Dorsolateral prefrontal cortex (tissue), 120 donors: ENCODE measurements at regions of chr3 and their contacts with region 1.

Region 1: DNA sequence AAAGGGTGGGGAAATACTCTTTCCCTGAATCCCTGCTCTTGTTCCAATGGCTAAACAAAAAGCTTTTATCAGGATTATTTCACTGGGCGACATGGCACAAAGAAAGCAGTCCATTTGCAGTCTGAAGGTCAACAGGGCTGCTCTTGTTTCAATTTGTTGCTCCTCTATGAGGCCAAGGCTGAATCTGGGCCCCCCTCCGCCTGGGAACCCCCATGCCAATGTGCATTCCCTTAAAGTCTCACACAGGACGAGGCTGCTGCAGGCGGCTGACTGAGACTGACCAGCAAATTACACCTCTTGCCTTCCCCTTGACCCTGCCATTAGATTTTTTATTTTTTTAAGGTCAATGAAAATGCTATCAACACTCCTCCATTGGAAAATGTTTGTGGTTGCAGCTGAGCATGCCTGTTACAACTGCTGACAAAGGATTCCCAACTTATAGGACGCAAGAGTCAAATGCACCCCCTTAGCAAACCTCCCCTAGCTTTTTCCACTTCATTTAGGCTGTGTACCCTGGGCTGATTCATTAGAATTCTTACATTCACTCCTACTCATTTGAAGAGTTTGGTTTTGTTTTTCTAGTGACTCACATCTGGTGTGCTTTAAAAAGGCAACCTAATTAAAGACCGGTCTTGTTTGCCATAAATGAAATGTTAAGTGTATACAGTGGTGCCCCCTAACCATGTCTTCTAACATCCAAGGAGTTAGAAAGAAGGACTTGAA is 60.8 kb upstream of the ARHGEF3 start:
- DNase-seq: peak in 9 of 10 donors; percentile 30 to 72 (median 64)
- H3K4me3 ChIP-seq: peak overlapping the region in 4 of 59 donors; percentile 19 to 28 (median 24)
- H3K27ac ChIP-seq: peak overlapping the region in 48 of 59 donors; percentile 1 to 82 (median 65)
- H3K27me3 ChIP-seq: no peaks in the 10 kb centered on the region
- CTCF ChIP-seq: peak in 3 of 56 donors; percentile 10 to 25 (median 15)

Region 2: GRCh38 chr3:56477646-56478045 is 384.9 kb before region 1 on chr3:
- intact Hi-C with region 1: no loop called
- DNase-seq: no peak
- H3K4me3 ChIP-seq: no peak overlapping the region
- H3K27ac ChIP-seq: no peak overlapping the region
- H3K27me3 ChIP-seq: no peaks in the 10 kb centered on the region
- CTCF ChIP-seq: no peak

Region 3: DNA sequence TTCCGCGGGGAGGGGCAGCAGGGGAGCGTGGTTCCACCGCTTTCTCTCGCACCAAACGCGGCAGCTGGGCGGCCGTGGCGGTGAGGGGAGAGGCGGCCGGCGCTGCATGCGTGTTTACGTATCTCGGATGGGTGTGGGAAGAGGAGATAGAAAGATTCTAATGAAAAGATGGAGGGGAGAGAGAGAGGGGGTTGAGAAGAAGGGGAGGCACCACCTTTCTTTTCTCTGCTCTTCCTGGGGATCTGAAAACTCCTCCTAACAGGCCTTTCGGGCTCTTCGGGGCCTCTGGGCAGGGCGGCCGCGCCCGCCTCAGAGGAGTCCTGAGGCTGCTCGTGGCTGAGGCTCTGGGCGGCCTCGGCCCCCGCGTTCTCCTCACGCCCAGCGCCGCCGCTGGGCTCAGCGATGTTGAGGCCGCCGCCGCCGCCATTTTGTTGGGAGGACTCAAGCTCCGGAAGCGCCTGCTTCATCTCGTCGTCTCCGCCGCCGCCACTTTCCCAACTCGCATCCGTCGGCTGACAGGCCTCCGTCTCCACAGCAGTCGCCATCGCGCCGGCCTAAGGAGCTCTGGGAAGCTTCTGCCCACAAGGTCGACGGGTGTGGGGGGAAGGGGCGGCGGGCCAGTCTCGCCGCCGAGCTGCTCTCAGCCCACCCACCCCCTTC is 179.9 kb before region 1 on chr3:
- intact Hi-C with region 1: no loop called
- DNase-seq: peak; percentile 41 to 85 (median 70)
- H3K4me3 ChIP-seq: peak overlapping the region; percentile 71 to 97 (median 88)
- H3K27ac ChIP-seq: peak overlapping the region; percentile 76 to 100 (median 98)
- H3K27me3 ChIP-seq: no peaks in the 10 kb centered on the region
- CTCF ChIP-seq: peak in 1 of 56 donors; percentile 2

Region 4: GRCh38 chr3:56894881-56895431 is 32.4 kb after region 1 on chr3:
- intact Hi-C with region 1: loop called in 1 of 2 experiments (anchors 2 kb)
- DNase-seq: peak in 8 of 10 donors; percentile 32 to 76 (median 68)
- H3K4me3 ChIP-seq: peak overlapping the region in 14 of 59 donors; percentile 2 to 41 (median 19)
- H3K27ac ChIP-seq: peak overlapping the region in 58 of 59 donors; percentile 1 to 94 (median 75)
- H3K27me3 ChIP-seq: no peaks in the 10 kb centered on the region
- CTCF ChIP-seq: peak in 1 of 56 donors; percentile 11